BJ (cell line): ENCODE measurements at regions of chr15 and their contacts with region 1.

Region 1: DNA sequence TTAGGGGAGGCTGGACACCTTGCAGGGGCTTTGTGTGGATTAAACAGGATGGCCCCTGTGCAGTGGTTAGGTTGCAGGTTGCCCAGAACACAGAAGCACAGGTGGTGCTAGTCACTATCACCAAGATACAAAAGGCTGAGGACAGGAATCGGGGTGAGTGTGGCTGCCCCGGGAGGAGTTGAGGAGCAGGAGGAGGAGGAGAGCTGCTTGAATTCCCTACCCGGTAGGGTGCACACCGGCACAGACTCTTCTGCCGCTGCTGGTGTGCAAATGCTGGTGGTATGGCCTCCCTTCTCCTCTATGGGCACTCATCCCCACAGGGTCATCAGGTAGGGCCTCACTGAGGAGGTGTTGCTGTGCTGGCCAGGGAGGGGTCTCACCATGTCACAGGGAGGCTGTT is 67.5 kb upstream of the SMAD6 start:
- DNase-seq: no peak
- H3K4me3 ChIP-seq: no peak overlapping the region
- H3K27me3 ChIP-seq: 0 out of 2 replicates have a peak, but pooled peaks cover 1% of the 10 kb centered on the region
- CTCF ChIP-seq: no peak

Region 2: DNA sequence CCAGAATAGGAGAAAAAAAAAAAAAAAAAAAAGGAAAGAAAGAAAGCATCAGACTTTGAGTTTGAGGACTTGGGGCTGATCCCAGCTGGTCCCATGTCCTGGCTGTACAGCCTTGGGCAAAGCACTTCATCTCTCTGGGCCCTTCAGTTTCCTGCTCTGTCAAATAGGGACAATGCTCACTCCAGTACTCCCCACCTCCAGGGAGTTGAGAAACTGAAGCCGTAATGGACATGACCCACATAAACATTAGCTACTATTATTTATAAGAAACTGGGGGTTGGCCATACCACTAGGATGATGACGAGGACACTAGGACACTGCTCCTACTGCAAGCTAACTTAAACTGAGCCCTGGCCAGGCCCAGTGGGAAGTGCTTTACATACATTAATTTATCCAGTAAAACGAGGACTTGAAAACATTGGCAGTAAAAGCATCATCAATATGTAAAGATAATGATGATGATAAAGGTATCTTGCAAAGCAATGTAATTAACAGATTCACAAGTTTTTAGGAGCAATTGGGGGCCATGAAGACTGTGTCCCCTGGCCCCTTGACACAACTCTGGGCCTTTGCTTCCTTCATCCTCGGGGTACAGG is 44.6 kb after region 1 on chr15:
- CTCF ChIA-PET with region 1: no interaction called
- POLR2A ChIA-PET with region 1: interaction called, 10 read pairs
- DNase-seq: no peak
- H3K4me3 ChIP-seq: no peak overlapping the region
- H3K27me3 ChIP-seq: no peaks in the 10 kb centered on the region
- CTCF ChIP-seq: no peak